PC-3 (cell line): ENCODE measurements at regions of chr17 and their contacts with region 1.

Region 1: GRCh38 chr17:45385331-45385997 is 47.2 kb downstream of the ARHGAP27 start:
- DNase-seq: peak; percentile 97
- ATAC-seq: peak; percentile 97
- H3K4me3 ChIP-seq: no peak overlapping the region
- H3K27ac ChIP-seq: no peak overlapping the region
- H3K4me1 ChIP-seq: peaks cover 14% of the 10 kb centered on the region
- H3K27me3 ChIP-seq: no peaks in the 10 kb centered on the region
- CTCF ChIP-seq: peak; percentile 99

Region 2: GRCh38 chr17:45218895-45219661 is 166.4 kb before region 1 on chr17:
- CTCF ChIA-PET with region 1: interaction called, 4 read pairs
- POLR2A ChIA-PET with region 1: no interaction called
- intact Hi-C with region 1: loop called (anchors 1 kb)
- DNase-seq: peak; percentile 92
- ATAC-seq: peak; percentile 76
- H3K4me3 ChIP-seq: no peak overlapping the region
- H3K27ac ChIP-seq: no peak overlapping the region
- H3K4me1 ChIP-seq: peaks cover 12% of the 10 kb centered on the region
- H3K27me3 ChIP-seq: no peaks in the 10 kb centered on the region
- CTCF ChIP-seq: peak; percentile 98

Region 3: DNA sequence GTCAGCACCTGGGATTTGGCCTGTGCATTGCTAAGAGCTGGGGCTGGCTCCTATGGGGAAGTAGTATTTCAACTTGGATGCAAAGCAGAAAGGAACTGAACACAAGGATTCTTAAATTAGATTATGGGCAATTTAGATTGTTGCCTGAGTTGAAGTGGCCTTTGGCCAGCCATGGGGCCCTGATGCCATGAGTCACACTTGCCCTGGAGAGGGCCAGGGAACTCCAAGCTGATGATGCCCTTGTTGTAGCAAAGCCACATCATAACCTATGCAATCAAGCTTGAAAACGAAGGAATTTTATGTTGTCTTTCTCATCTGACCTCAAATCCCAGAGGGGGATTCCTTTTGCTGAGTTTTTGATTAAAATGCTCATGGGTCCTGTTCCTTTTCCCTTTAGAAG is 119.6 kb before region 1 on chr17:
- CTCF ChIA-PET with region 1: no interaction called
- POLR2A ChIA-PET with region 1: no interaction called
- intact Hi-C with region 1: no loop called
- DNase-seq: peak; percentile 61
- ATAC-seq: peak; percentile 47
- H3K4me3 ChIP-seq: no peak overlapping the region
- H3K27ac ChIP-seq: no peak overlapping the region
- H3K4me1 ChIP-seq: peaks cover 26% of the 10 kb centered on the region
- H3K27me3 ChIP-seq: no peaks in the 10 kb centered on the region
- CTCF ChIP-seq: no peak

Region 4: GRCh38 chr17:45277216-45277849 is 108.1 kb before region 1 on chr17:
- CTCF ChIA-PET with region 1: interaction called, 9 read pairs
- POLR2A ChIA-PET with region 1: no interaction called
- intact Hi-C with region 1: loop called (anchors 1 kb)
- DNase-seq: peak; percentile 97
- ATAC-seq: peak; percentile 87
- H3K4me3 ChIP-seq: no peak overlapping the region
- H3K27ac ChIP-seq: no peak overlapping the region
- H3K4me1 ChIP-seq: peaks cover 9% of the 10 kb centered on the region
- H3K27me3 ChIP-seq: no peaks in the 10 kb centered on the region
- CTCF ChIP-seq: peak; percentile 90

Region 5: GRCh38 chr17:45293413-45294211 is 91.9 kb before region 1 on chr17:
- CTCF ChIA-PET with region 1: interaction called, 3 read pairs
- POLR2A ChIA-PET with region 1: no interaction called
- intact Hi-C with region 1: loop called (anchors 5 kb)
- DNase-seq: peak; percentile 90
- ATAC-seq: peak; percentile 77
- H3K4me3 ChIP-seq: no peak overlapping the region
- H3K27ac ChIP-seq: peak overlapping the region; percentile 72
- H3K4me1 ChIP-seq: peaks cover 52% of the 10 kb centered on the region
- H3K27me3 ChIP-seq: no peaks in the 10 kb centered on the region
- CTCF ChIP-seq: peak; percentile 49

Region 6: GRCh38 chr17:45828628-45829027 is 443.2 kb after region 1 on chr17:
- CTCF ChIA-PET with region 1: no interaction called
- POLR2A ChIA-PET with region 1: no interaction called
- intact Hi-C with region 1: no loop called
- DNase-seq: peak; percentile 22
- ATAC-seq: no peak; the same call in 1 of the 2 replicates
- H3K4me3 ChIP-seq: no peak overlapping the region
- H3K27ac ChIP-seq: no peak overlapping the region
- H3K4me1 ChIP-seq: 0 out of 2 replicates have a peak, but pooled peaks cover 4% of the 10 kb centered on the region
- H3K27me3 ChIP-seq: 0 out of 2 replicates have a peak, but pooled peaks cover 6% of the 10 kb centered on the region
- CTCF ChIP-seq: no peak; the same call in 1 of the 2 replicates